Ovary (tissue), 10 donors: ENCODE measurements at regions of chr7 and their contacts with region 1.

Region 1: DNA sequence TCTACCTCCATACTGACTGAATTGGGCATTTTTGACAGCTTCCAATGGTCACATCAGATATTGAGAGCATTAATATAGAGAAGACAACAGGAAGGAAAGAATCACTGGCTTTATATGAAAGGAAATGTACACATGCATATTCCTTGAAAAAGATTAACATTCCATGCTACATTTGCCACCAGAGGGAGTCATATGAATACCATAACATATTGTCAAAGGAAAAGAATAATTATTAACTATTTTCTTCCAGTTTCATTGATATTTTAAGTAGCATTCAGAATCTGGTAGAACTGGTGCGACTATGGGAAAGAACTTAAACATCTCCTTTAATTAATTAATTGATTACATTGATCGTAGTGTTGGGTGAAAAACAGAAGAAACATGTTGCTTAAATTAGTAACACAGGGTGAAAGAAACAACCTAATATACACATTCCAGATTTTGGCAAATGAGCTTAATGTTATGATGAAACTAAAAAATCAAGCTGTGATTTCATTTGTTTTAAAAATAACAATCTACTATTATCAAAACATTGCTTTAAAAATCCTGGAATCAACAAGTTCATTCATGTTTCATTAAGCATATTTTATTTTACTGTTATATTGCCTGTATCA is 71.5 kb downstream of the GPR85 start:
- DNase-seq: no peak
- H3K4me3 ChIP-seq: no peak overlapping the region
- H3K27ac ChIP-seq: no peak overlapping the region
- H3K4me1 ChIP-seq: no peaks in the 10 kb centered on the region
- H3K27me3 ChIP-seq: no peaks in the 10 kb centered on the region
- CTCF ChIP-seq: no peak
- EP300 ChIP-seq: no peak
- POLR2A ChIP-seq: no peak

Region 2: GRCh38 chr7:113404245-113404644 is 389.1 kb after region 1 on chr7:
- intact Hi-C with region 1: loop called in 1 of 4 experiments (anchors 10 kb)
- DNase-seq: no peak
- H3K4me3 ChIP-seq: no peak overlapping the region
- H3K27ac ChIP-seq: no peak overlapping the region
- H3K4me1 ChIP-seq: no peaks in the 10 kb centered on the region
- H3K27me3 ChIP-seq: no peaks in the 10 kb centered on the region
- CTCF ChIP-seq: no peak
- EP300 ChIP-seq: no peak
- POLR2A ChIP-seq: no peak